Activated naive CD4-positive, alpha-beta T cell treated with anti-CD3 and anti-CD28 coated beads for 36 hours (primary cell): ENCODE measurements at regions of chr2 and their contacts with region 1.

Region 1: DNA sequence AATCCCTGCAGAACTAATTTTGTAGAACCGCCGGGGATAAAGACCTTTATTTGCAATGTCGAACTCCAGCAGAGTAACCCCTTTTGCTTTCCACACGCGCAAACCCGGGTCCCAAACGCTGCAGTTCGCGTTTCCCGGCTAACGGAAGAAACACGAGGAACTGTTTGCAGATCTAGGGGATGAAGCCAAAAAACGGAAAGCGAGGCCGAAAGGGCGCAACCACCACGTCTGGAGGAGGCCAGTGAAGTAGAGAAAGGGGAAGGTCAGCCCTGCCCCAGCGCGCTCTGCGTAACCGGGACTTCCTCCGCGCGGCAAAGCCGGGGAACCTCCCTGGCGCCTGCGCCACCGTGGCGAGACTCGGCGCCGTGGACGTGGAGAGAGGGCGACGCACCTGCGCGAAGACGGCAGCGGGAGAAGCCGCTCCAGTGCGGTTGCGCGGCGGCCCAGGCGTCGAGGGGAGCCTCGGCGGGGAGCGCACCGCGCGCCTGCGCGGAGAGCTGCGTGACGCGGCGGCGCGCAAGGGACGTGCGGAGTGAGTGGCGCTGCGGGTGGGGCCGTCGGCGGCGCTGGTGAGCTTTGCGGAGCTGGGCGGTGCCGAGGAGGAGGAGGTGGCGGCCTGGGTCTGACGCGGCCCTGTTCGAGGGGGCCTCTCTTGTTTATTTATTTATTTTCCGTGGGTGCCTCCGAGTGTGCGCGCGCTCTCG is at the start of gene PPP1CB:
- DNase-seq: peak; percentile 94
- H3K4me3 Mint-ChIP-seq: peak within 1 kb of the TSS; percentile 91
- H3K27ac Mint-ChIP-seq: peak within 1 kb of the TSS; percentile 95
- H3K4me1 Mint-ChIP-seq: peaks cover 50% of the 10 kb centered on the region
- H3K27me3 Mint-ChIP-seq: no peaks in the 10 kb centered on the region
- total RNA-seq, gene PPP1CB: 235 to 239 TPM

Region 2: GRCh38 chr2:28621172-28622100 is 130.0 kb before region 1 on chr2:
- CTCF ChIA-PET with region 1: interaction called, 6 read pairs
- intact Hi-C with region 1: loop called (anchors 1 kb)
- DNase-seq: peak; percentile 91
- H3K4me3 Mint-ChIP-seq: peak overlapping the region; percentile 41
- H3K27ac Mint-ChIP-seq: peak overlapping the region; percentile 94
- H3K4me1 Mint-ChIP-seq: peaks cover 92% of the 10 kb centered on the region
- H3K27me3 Mint-ChIP-seq: no peaks in the 10 kb centered on the region

Region 3: GRCh38 chr2:28713577-28714298 is 37.7 kb before region 1 on chr2:
- CTCF ChIA-PET with region 1: no interaction called
- intact Hi-C with region 1: loop called (anchors 2 kb)
- DNase-seq: peak; percentile 42
- H3K4me3 Mint-ChIP-seq: no peak overlapping the region
- H3K27ac Mint-ChIP-seq: peak overlapping the region; percentile 87
- H3K4me1 Mint-ChIP-seq: peaks cover 28% of the 10 kb centered on the region
- H3K27me3 Mint-ChIP-seq: no peaks in the 10 kb centered on the region

Region 4: DNA sequence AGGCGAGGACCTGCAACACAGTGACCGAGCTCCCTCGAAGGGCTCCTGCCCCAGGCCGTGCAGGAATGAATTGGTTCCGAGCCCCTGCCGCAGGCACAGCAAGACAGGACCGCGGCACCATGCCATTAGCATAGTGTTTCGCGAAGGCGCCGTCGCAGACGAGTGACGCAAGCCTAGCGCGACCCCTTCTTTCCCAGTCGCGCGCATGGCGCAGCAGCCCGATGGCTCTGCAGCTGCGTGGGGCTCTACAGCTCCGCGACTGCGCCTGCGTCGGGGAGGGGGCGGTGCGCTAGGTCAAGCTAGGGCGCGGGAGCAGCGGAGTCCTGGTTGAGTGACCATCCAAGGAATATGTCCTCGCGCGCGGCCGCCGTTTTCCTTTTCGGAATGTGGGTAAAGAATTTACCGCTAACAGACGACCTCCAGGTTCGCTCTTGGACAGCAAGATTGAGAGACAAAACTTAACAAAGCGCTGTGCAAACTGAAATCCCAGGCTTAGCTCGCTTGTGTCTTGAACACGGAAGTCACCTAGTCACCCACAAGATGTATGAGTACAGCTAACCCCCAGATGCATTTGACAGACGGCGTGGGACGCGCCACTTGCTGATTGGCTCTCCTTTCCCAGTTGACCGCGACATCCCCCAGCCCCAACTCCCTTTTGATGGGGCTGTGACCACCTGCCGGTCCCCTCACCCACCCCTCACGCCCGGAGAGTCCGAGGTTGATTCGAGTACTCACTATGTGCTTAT is 118.9 kb after region 1 on chr2 and contains the start of gene TRMT61B:
- CTCF ChIA-PET with region 1: interaction called, 3 read pairs
- intact Hi-C with region 1: loop called (anchors 1 kb)
- DNase-seq: peak; percentile 97
- H3K4me3 Mint-ChIP-seq: peak within 1 kb of the TSS; percentile 89
- H3K27ac Mint-ChIP-seq: peak within 1 kb of the TSS; percentile 89
- H3K4me1 Mint-ChIP-seq: peaks cover 31% of the 10 kb centered on the region
- H3K27me3 Mint-ChIP-seq: no peaks in the 10 kb centered on the region
- total RNA-seq, gene TRMT61B: 13.6 to 15.5 TPM